H1 (cell line): ENCODE measurements at regions of chr11 and their contacts with region 1.

Region 1: GRCh38 chr11:125423247-125423849 is 72.7 kb downstream of the FEZ1 start:
- DNase-seq: no peak
- H3K4me3 ChIP-seq: no peak overlapping the region
- H3K27ac ChIP-seq: no peak overlapping the region
- H3K4me1 ChIP-seq: peaks cover 0 to 4% (median under 1%) of the 10 kb centered on the region in 4 experiments; a peak in 3 of 7 replicates
- H3K27me3 ChIP-seq: no peaks in the 10 kb centered on the region
- CTCF ChIP-seq: peak; percentile 54 to 80 (median 59)
- EP300 ChIP-seq: no peak
- POLR2A ChIP-seq: no peak
- RAD21 ChIP-seq: peak; percentile 40 to 47; a peak in 3 of 4 replicates

Region 2: GRCh38 chr11:125351033-125351867 is 72.1 kb before region 1 on chr11:
- CTCF ChIA-PET with region 1: interaction called, 234 read pairs
- POLR2A ChIA-PET with region 1: no interaction called
- DNase-seq: no peak
- H3K4me3 ChIP-seq: no peak overlapping the region
- H3K27ac ChIP-seq: no peak overlapping the region
- H3K4me1 ChIP-seq: peaks cover 0 to 22% (median 10%) of the 10 kb centered on the region in 4 experiments; a peak in 6 of 7 replicates
- H3K27me3 ChIP-seq: peaks cover 0 to 9% (median 1%) of the 10 kb centered on the region in 4 experiments; a peak in 2 of 7 replicates
- CTCF ChIP-seq: no peak
- EP300 ChIP-seq: no peak
- POLR2A ChIP-seq: no peak
- RAD21 ChIP-seq: no peak

Region 3: DNA sequence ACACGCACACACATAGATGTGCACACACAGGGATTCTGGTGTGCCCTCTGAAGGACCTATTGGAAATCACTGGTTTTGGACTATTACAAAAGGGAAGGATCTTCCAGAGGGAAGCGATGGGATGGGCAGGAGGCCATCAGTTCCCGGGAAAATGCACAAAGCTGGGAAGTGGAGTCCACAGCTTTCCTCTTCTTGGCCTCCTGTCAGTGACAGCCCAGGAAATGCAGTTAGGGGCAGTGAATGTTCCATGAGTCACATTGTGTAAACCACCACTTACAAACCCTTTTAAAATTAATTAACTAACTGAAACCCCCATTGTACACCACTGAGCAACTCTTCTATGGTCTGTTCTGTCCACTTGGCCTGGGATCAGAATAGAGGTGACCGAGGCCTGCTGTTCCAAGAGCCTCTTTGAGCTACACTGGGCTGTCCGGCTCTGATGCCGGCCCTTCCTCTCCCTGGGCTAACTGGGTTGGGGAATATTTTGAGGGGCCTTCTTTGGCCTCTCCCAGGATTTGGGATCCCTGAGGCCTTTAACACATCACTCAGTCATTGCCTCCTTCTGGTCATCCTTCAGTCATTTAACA is 65.0 kb before region 1 on chr11:
- CTCF ChIA-PET with region 1: interaction called, 234 read pairs
- POLR2A ChIA-PET with region 1: no interaction called
- DNase-seq: no peak
- H3K4me3 ChIP-seq: no peak overlapping the region
- H3K27ac ChIP-seq: no peak overlapping the region
- H3K4me1 ChIP-seq: peaks cover 0 to 2% (median 0%) of the 10 kb centered on the region in 4 experiments; a peak in 1 of 7 replicates
- H3K27me3 ChIP-seq: no peaks in the 10 kb centered on the region
- CTCF ChIP-seq: no peak
- EP300 ChIP-seq: no peak
- POLR2A ChIP-seq: no peak
- RAD21 ChIP-seq: no peak

Region 4: DNA sequence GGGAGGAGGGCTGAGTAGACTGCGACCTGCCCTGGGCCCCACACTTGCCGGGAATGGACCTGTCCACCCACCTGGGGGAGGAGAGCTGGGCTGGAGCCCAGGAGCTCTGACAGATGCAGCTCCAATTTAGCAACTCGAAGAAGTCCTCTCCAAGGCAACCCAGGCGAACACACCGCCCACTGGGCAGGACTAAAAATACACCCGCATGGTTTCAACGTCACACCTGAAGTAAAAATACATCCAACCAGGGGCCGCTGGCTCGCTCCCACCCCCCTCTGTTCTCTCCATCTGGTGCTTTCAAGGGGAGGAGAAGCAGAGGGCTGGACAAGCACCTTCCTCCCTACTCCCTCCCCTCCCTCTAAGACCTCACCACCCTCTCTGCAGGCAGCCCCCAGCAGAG is 47.2 kb before region 1 on chr11:
- CTCF ChIA-PET with region 1: interaction called, 20 read pairs
- POLR2A ChIA-PET with region 1: no interaction called
- DNase-seq: no peak
- H3K4me3 ChIP-seq: no peak overlapping the region
- H3K27ac ChIP-seq: no peak overlapping the region
- H3K4me1 ChIP-seq: peaks cover 12 to 25% (median 22%) of the 10 kb centered on the region in 4 experiments
- H3K27me3 ChIP-seq: peaks cover 0 to 4% (median 0%) of the 10 kb centered on the region in 4 experiments; a peak in 2 of 7 replicates
- CTCF ChIP-seq: no peak
- EP300 ChIP-seq: no peak
- POLR2A ChIP-seq: no peak
- RAD21 ChIP-seq: no peak

Region 5: DNA sequence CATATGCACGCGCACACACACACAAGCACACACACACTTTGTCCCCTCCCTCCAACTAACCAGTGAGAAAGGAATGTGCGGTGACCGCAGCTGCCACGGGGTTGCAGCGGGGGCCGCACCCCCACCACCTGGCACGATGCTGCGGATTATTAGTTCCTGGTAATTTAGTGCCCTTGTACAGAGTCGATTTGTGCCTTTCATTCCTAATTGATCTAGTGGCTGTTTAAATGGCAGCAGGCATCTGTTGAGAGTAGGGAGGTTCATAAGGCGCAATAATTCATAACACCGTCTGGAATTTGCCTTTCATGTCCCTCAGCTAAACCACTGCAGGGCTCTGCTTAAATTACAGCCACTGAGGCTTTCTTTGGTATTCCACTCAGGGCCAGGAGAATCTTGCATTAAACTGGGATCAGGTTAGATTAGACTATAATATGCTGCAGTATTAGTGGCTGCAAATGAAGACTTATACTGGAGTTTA is 41.0 kb before region 1 on chr11:
- CTCF ChIA-PET with region 1: interaction called, 14 read pairs
- POLR2A ChIA-PET with region 1: no interaction called
- DNase-seq: no peak
- H3K4me3 ChIP-seq: no peak overlapping the region
- H3K27ac ChIP-seq: no peak overlapping the region
- H3K4me1 ChIP-seq: peaks cover 0 to 9% (median 0%) of the 10 kb centered on the region in 4 experiments; a peak in 3 of 7 replicates
- H3K27me3 ChIP-seq: no peaks in the 10 kb centered on the region; a peak in 1 of 7 replicates
- CTCF ChIP-seq: no peak
- EP300 ChIP-seq: no peak
- POLR2A ChIP-seq: no peak
- RAD21 ChIP-seq: no peak

Region 6: GRCh38 chr11:125433454-125434121 is 10.2 kb after region 1 on chr11:
- CTCF ChIA-PET with region 1: no interaction called
- POLR2A ChIA-PET with region 1: no interaction called
- DNase-seq: peak in 1 of 2 experiments; percentile 76
- H3K4me3 ChIP-seq: no peak overlapping the region
- H3K27ac ChIP-seq: no peak overlapping the region
- H3K4me1 ChIP-seq: peaks cover 3 to 17% (median 12%) of the 10 kb centered on the region in 4 experiments
- H3K27me3 ChIP-seq: no peaks in the 10 kb centered on the region
- CTCF ChIP-seq: peak; percentile 78 to 95 (median 88)
- EP300 ChIP-seq: no peak
- POLR2A ChIP-seq: no peak
- RAD21 ChIP-seq: peak; percentile 68 to 76